ENCODE measurements at regions of chr2 and their contacts with region 1.

Region 1: GRCh38 chr2:32168513-32168912 is 2.8 kb downstream of the SLC30A6 start:
- DNase-seq: no peak
- H3K4me3 Mint-ChIP-seq: no peak overlapping the region
- H3K27ac Mint-ChIP-seq: no peak overlapping the region
- H3K4me1 Mint-ChIP-seq: peaks cover 36% of the 10 kb centered on the region
- H3K27me3 Mint-ChIP-seq: no peaks in the 10 kb centered on the region

Region 2: DNA sequence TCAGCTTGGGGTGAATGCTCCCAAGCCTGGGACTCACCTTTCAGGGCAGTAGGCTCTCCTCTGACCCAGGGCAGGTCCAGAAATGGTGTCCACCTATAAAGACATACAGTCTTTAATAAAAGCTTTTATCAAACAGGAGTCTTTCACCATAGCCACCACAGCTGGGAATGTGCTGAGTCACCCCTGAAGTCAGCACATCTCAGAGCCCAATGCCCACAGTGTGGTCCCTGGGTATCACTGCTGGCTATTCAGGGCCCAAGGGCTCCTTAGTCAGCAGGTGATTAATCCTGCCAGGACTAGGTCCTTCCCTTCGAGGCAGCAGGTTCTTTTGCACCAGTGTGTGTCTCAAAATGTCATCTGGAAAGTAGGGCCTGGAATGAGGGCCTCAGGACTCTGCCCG is 339.6 kb before region 1 on chr2:
- intact Hi-C with region 1: no loop called
- DNase-seq: no peak
- H3K4me3 Mint-ChIP-seq: no peak overlapping the region
- H3K27ac Mint-ChIP-seq: no peak overlapping the region
- H3K4me1 Mint-ChIP-seq: no peaks in the 10 kb centered on the region
- H3K27me3 Mint-ChIP-seq: no peaks in the 10 kb centered on the region

Region 3: GRCh38 chr2:32189011-32189410 is 20.5 kb after region 1 on chr2:
- intact Hi-C with region 1: loop called (anchors 2 kb)
- DNase-seq: no peak
- H3K4me3 Mint-ChIP-seq: no peak overlapping the region
- H3K27ac Mint-ChIP-seq: no peak overlapping the region
- H3K4me1 Mint-ChIP-seq: peaks cover 40% of the 10 kb centered on the region
- H3K27me3 Mint-ChIP-seq: no peaks in the 10 kb centered on the region

Region 4: DNA sequence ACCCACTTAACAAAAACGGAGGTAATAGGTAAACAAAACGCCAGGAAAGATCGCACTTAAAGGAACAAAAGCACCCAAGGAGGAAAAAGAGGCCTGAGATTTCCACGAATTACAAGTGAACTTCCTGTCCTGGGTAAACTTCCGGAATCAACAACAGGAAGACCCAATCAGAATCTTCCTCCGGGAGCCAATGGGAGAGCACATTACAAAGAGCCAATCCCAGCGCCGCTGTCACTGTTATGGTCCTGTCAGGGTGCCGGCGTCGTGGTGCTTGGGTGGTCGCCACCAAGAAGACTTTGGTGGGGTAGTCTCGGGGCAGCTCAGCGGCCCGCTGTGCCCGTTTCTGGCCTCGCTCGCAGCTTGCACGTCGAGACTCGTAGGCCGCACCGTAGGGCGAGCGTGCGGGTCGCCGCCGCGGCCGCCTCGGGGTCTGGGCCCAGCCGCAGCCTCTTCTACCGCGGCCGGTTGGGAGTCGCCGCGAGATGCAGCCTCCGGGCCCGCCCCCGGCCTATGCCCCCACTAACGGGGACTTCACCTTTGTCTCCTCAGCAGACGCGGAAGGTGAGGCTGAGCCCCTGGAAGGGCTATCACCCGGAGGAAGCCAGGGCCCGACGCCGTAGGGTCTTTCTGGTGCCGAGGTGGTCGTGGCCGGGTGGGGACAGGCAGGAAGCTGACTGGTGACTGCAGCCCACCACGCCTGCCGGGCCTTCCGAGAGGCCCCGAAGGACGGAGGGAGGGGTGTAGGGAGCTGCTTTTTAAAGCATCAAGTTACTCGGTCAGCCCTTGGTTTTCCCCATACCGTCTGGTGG is 109.4 kb after region 1 on chr2 and contains the start of gene YIPF4:
- intact Hi-C with region 1: loop called (anchors 1 kb)
- DNase-seq: peak; percentile 85
- H3K4me3 Mint-ChIP-seq: peak within 1 kb of the TSS; percentile 97
- H3K27ac Mint-ChIP-seq: peak within 1 kb of the TSS; percentile 94
- H3K4me1 Mint-ChIP-seq: peaks cover 7% of the 10 kb centered on the region
- H3K27me3 Mint-ChIP-seq: peaks cover 2% of the 10 kb centered on the region
- total RNA-seq, gene YIPF4: 33.4 and 36.7 TPM in 2 replicates

Region 5: DNA sequence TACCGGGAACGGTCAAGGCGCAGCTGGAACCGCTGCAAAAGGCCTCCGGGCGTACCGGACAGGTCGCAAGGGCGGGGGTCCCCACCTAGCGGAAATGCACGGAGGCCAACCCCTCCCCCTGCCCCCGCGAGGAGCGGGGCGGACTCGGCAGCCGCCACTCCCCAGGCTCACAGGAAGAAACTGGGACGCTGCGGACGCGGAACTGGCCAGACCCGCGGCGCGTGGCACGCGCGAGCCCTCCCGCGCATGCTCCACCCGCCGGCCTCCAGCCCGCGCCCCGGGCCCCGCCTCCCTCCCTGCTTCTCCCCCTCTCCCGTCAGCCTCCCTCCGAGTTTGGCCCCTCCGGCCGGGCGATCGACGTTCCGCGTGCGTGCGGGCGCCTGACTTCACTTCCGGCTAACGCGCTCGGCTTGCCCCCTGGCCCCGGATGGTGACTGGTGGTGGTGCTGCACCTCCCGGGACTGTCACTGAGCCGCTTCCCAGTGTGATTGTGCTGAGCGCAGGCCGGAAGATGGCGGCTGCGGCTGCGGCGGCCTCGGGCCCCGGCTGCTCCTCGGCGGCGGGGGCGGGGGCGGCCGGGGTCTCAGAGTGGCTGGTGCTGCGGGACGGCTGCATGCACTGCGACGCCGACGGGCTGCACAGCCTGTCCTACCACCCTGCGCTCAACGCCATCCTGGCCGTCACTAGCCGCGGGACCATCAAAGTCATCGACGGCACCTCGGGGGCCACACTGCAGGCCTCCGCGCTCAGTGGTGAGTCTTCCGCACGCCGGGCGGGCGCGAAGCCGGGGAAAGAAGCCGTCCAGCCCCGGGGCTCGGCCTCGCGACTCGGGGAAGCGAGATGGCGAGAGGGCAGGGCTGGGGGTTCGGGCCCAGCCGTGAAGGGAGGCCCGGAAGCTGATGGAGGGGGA is 188.5 kb after region 1 on chr2 and contains the start of gene BIRC6:
- intact Hi-C with region 1: loop called (anchors 1 kb)
- DNase-seq: peak; percentile 94
- H3K4me3 Mint-ChIP-seq: peak within 1 kb of the TSS; percentile 89
- H3K27ac Mint-ChIP-seq: peak within 1 kb of the TSS; percentile 92
- H3K4me1 Mint-ChIP-seq: peaks cover 34% of the 10 kb centered on the region
- H3K27me3 Mint-ChIP-seq: no peaks in the 10 kb centered on the region
- total RNA-seq, gene BIRC6: 111 and 123 TPM in 2 replicates

Region 6: GRCh38 chr2:32502941-32503340 is 334.4 kb after region 1 on chr2:
- intact Hi-C with region 1: no loop called
- DNase-seq: no peak
- H3K4me3 Mint-ChIP-seq: no peak overlapping the region
- H3K27ac Mint-ChIP-seq: no peak overlapping the region
- H3K4me1 Mint-ChIP-seq: peaks cover 5% of the 10 kb centered on the region
- H3K27me3 Mint-ChIP-seq: no peaks in the 10 kb centered on the region

Region 7: DNA sequence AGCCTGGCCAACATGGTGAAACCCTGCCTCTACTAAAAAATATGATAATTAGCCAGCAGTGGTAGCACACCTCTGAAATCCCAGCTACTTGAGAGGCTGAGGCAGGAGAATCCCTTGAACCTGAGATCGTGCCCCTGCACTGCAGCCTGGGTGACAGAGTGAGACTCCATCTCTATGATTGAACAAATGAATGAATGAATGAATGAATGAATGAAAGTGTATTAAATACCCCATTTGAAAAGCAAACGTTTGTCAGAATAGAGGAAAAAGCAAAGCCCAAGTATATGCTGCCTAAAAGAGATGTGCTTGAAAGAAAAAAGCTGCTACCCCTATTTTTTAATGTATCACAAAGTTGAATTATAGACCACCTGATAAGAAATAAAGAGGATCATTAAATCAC is 370.2 kb after region 1 on chr2:
- intact Hi-C with region 1: no loop called
- DNase-seq: no peak
- H3K4me3 Mint-ChIP-seq: no peak overlapping the region
- H3K27ac Mint-ChIP-seq: no peak overlapping the region
- H3K4me1 Mint-ChIP-seq: peaks cover 5% of the 10 kb centered on the region
- H3K27me3 Mint-ChIP-seq: no peaks in the 10 kb centered on the region